ENCODE measurements at regions of chr12 and their contacts with region 1.

Region 1: DNA sequence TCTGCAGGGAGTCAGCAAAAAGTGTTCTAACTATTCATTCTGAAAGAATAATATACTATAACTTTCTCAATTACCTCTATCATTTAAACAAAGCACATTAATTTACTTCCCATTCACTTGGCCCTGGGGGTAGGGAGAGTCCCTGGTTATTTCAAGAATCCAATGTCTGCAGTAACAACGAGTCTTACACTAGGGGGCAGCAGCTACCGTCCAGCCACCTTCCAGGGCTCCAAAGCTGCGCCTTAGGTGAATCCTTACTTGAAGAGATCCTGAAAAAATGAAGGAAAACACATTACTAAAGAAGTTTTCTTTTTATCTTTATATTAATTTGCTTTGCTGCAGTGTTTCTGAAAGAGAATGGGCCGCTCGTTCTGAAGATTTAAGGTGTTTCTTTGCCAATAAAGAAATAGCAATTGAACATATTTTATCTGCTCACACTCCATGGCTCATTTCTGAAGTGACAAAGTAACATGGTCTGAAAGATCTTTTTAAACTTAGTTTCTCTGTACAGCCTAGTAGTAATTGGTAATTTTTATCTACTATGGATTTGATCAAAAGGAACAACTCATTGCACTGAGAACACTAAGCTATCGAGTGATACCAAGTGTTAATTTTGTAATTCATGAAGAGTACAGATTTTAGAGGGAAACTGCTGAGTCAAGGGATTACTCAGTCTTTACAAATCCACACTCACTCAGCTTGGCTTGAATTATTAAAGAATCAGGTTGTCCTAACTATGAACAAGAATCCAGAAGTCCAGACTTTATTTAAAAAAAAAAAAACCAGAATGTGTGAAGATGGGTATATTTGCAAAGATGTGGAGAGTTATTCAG is 27.6 kb downstream of the BHLHE41 start:
- DNase-seq: peak; percentile 54 to 84
- H3K4me3 ChIP-seq: no peak overlapping the region
- H3K27ac ChIP-seq: no peak overlapping the region
- H3K4me1 ChIP-seq: no peaks in the 10 kb centered on the region
- H3K27me3 ChIP-seq: no peaks in the 10 kb centered on the region
- CTCF ChIP-seq: peak; percentile 88 to 92

Region 2: GRCh38 chr12:25713264-25713663 is 384.0 kb before region 1 on chr12:
- intact Hi-C with region 1: no loop called
- DNase-seq: no peak
- H3K4me3 ChIP-seq: no peak overlapping the region
- H3K27ac ChIP-seq: no peak overlapping the region
- H3K4me1 ChIP-seq: no peaks in the 10 kb centered on the region
- H3K27me3 ChIP-seq: no peaks in the 10 kb centered on the region
- CTCF ChIP-seq: no peak

Region 3: GRCh38 chr12:26044012-26044383 is 53.3 kb before region 1 on chr12:
- intact Hi-C with region 1: no loop called
- DNase-seq: no peak
- H3K4me3 ChIP-seq: no peak overlapping the region
- H3K27ac ChIP-seq: no peak overlapping the region
- H3K4me1 ChIP-seq: peaks cover 0 to 43% (median 18%) of the 10 kb centered on the region in 4 donors
- H3K27me3 ChIP-seq: no peaks in the 10 kb centered on the region
- CTCF ChIP-seq: no peak

Region 4: DNA sequence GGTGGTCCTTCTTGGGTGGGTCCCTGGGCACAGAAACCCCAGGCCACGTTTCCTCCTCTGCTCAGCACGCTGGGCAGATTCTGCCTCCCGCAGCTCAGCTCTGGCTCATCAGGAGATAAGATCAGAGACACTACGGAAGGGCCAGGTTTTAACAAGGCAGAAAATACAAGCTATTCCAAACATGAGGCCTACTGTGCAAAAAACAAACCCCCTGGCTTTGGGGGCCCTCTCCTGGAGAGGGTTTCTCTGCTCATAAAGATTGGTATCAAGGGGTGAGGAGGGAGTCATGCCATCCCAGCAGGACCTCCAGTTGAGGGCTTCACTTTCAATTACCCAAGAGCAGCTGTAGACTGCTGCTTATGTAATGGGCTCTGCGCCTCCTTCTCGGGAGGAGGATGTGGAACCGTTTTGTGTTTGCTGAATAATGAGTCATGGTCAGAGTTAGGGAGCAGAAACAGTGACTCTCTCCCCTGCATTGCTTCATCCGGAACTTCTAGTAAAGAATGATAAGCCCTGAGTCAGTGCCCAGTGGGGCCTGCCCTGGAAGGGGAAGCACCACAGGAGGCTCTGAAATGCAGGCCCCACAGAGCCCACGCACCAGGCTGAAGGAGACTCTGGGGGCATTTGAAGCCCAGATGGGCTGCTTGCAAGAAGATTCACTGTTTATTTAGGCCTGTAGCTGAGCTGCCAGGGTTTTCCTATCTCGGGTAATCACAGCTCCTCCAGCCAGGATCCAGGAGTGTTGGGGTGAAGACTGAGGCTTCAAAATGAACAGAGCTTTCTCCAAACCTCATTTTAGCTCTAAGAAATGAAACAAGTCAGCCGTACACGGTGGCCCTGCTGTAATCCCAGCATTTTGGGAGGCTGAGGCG is 177.4 kb after region 1 on chr12:
- intact Hi-C with region 1: no loop called
- DNase-seq: peak; percentile 93 to 94
- H3K4me3 ChIP-seq: no peak overlapping the region
- H3K27ac ChIP-seq: peak overlapping the region; percentile 67 to 85
- H3K4me1 ChIP-seq: peaks cover 0 to 43% (median 37%) of the 10 kb centered on the region in 4 donors
- H3K27me3 ChIP-seq: no peaks in the 10 kb centered on the region
- CTCF ChIP-seq: no peak

Region 5: DNA sequence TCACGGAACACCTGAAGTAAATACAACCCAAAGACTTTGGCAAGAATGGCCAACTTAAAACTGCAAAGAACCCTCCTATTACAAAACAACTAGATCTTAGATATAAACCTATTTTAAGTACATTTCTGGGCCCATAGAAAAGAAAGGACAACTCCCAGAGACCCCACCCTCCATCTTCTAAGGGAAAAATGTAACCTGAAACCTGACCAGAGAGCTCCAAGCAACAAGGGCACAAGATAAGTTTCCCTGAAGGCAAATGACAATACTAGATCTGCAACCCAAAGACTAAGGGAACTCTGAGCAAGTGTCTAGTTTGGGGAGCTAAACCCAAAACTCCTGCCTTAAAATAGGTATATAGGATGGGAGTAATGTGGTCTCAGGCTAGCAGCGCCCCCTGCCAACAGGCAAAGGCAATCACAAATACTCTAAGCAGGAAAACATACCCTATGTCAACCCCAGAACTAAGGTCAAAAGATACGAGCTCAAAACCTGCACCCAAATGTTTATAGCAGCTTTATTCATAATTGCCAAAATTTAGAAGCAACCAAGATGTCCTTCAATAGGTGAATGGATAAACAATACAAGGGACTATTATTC is 516.9 kb after region 1 on chr12:
- intact Hi-C with region 1: loop called (anchors 10 kb)
- DNase-seq: no peak
- H3K4me3 ChIP-seq: no peak overlapping the region
- H3K27ac ChIP-seq: no peak overlapping the region
- H3K4me1 ChIP-seq: no peaks in the 10 kb centered on the region
- H3K27me3 ChIP-seq: no peaks in the 10 kb centered on the region
- CTCF ChIP-seq: peak; percentile 38 to 40

Region 6: GRCh38 chr12:26648584-26648983 is 551.3 kb after region 1 on chr12:
- intact Hi-C with region 1: loop called (anchors 10 kb)
- DNase-seq: no peak
- H3K4me3 ChIP-seq: no peak overlapping the region
- H3K27ac ChIP-seq: no peak overlapping the region
- H3K4me1 ChIP-seq: peaks cover 0 to 16% (median 0%) of the 10 kb centered on the region in 4 donors
- H3K27me3 ChIP-seq: no peaks in the 10 kb centered on the region
- CTCF ChIP-seq: no peak

Measured in tibial artery (tissue), 4 donors.